ENCODE measurements at regions of chrX and their contacts with region 1.

Region 1: GRCh38 chrX:69222103-69223090 is 57.1 kb upstream of the PJA1 start:
- DNase-seq: peak; percentile 83
- ATAC-seq: peak; percentile 93
- H3K4me3 ChIP-seq: no peak overlapping the region
- H3K27ac ChIP-seq: no peak overlapping the region
- H3K4me1 ChIP-seq: peaks cover 8% of the 10 kb centered on the region
- H3K27me3 ChIP-seq: no peaks in the 10 kb centered on the region
- CTCF ChIP-seq: peak; percentile 86

Region 2: DNA sequence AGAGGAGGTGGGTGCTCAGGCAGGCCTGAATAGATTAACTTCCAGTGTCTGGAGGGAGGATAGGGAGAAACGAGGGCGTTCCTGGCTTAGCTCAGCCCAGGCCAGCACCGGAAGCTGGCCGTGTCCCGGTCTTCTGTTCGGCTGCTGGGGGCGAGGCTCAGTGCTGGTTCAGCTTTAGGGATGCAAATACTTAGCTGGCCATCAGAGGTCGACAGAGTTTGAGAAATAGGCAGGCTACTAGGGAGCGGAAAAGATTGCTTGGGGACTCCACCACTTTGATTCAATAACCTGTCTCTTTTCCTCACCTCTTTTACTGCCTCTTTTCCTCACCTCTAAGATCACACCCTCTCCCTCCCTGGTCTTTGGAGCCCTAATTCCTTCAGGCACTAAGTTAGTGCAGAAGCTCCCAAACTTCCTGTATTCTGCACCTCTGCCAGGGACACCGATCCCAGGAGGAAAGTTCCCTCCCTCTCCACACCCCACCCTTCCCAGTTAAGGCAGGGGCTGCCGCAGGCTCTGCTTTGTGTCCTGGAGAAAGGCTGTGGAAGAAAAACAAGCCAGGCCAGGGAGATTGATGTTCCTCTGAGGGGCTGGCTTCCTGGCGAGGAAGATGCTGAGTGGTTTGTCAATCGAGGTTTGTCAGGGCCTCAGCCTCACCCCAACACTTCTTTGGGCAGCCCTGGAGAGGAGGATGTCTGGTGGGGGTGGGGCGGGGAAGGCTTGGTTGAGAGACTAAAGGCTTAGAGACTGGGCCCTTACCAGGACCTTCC is 399.6 kb before region 1 on chrX:
- CTCF ChIA-PET with region 1: interaction called, 11 read pairs
- POLR2A ChIA-PET with region 1: interaction called, 4 read pairs
- intact Hi-C with region 1: loop called (anchors 1 kb)
- DNase-seq: peak; percentile 67
- ATAC-seq: peak; percentile 79
- H3K4me3 ChIP-seq: no peak overlapping the region
- H3K27ac ChIP-seq: no peak overlapping the region
- H3K4me1 ChIP-seq: peaks cover 9% of the 10 kb centered on the region; the same call in 1 of the 2 replicates
- H3K27me3 ChIP-seq: no peaks in the 10 kb centered on the region
- CTCF ChIP-seq: peak; percentile 74

Region 3: GRCh38 chrX:68828740-68829552 is 393.5 kb before region 1 on chrX and contains the start of gene EFNB1:
- CTCF ChIA-PET with region 1: interaction called, 11 read pairs
- POLR2A ChIA-PET with region 1: interaction called, 9 read pairs
- intact Hi-C with region 1: loop called (anchors 1 kb)
- DNase-seq: peak; percentile 96
- ATAC-seq: peak; percentile 65
- H3K4me3 ChIP-seq: peak within 1 kb of the TSS; percentile 93
- H3K27ac ChIP-seq: peak within 1 kb of the TSS; percentile 87
- H3K4me1 ChIP-seq: peaks cover 32% of the 10 kb centered on the region
- H3K27me3 ChIP-seq: no peaks in the 10 kb centered on the region
- CTCF ChIP-seq: no peak
- total RNA-seq, gene EFNB1: 102 and 142 TPM in 2 replicates

Region 4: GRCh38 chrX:69032601-69033000 is 189.8 kb before region 1 on chrX:
- CTCF ChIA-PET with region 1: no interaction called
- POLR2A ChIA-PET with region 1: no interaction called
- intact Hi-C with region 1: loop called (anchors 1 kb)
- DNase-seq: peak; percentile 92
- ATAC-seq: peak; percentile 83
- H3K4me3 ChIP-seq: no peak overlapping the region
- H3K27ac ChIP-seq: peak overlapping the region; percentile 95
- H3K4me1 ChIP-seq: peaks cover 46% of the 10 kb centered on the region
- H3K27me3 ChIP-seq: no peaks in the 10 kb centered on the region
- CTCF ChIP-seq: 0 out of 2 replicates have a peak, but pooled peaks have one; percentile 18

Region 5: GRCh38 chrX:69133921-69134542 is 88.4 kb before region 1 on chrX:
- CTCF ChIA-PET with region 1: no interaction called
- POLR2A ChIA-PET with region 1: no interaction called
- intact Hi-C with region 1: loop called (anchors 1 kb)
- DNase-seq: peak; percentile 79
- ATAC-seq: peak; percentile 97
- H3K4me3 ChIP-seq: no peak overlapping the region
- H3K27ac ChIP-seq: no peak overlapping the region
- H3K4me1 ChIP-seq: no peaks in the 10 kb centered on the region
- H3K27me3 ChIP-seq: no peaks in the 10 kb centered on the region
- CTCF ChIP-seq: peak; percentile 85

Region 6: DNA sequence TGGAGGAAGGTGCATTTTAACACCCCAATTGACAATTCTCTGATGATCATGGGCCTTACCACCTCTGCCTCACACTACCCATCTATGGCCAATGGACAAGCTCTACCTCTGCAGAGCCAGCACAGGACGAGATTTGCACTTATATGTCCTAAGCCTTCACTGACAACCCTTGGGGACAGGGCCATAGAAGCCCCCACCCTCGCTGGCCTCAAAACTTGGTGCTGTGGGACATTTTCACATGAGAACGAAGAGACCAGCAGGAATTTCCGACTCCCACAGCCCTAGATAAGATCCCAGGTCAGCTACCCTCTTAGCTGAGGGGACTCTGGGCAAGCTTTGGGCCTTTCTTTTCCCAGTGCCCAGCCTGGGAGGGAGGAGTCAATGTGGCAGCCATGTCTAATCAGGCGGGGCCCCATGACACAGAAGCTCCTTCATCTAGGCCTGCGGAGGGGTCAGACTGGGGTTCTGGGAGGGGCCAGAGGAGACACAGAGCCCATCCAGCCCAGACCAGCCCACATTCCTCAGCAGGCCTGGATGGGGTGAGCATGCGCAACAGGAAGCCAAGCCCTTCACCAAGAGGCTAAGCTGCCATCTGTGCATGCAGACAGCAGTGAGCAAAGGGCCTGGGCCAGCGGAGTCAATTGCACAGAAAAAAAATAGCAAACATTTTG is 69.2 kb before region 1 on chrX:
- CTCF ChIA-PET with region 1: no interaction called
- POLR2A ChIA-PET with region 1: no interaction called
- intact Hi-C with region 1: loop called (anchors 5 kb)
- DNase-seq: no peak
- ATAC-seq: no peak
- H3K4me3 ChIP-seq: no peak overlapping the region
- H3K27ac ChIP-seq: peak overlapping the region; percentile 96
- H3K4me1 ChIP-seq: peaks cover 39% of the 10 kb centered on the region
- H3K27me3 ChIP-seq: no peaks in the 10 kb centered on the region
- CTCF ChIP-seq: no peak

Measured in PC-3 (cell line).